Common myeloid progenitor, CD34-positive (primary cell): ENCODE measurements at regions of chr5 and their contacts with region 1.

Region 1: DNA sequence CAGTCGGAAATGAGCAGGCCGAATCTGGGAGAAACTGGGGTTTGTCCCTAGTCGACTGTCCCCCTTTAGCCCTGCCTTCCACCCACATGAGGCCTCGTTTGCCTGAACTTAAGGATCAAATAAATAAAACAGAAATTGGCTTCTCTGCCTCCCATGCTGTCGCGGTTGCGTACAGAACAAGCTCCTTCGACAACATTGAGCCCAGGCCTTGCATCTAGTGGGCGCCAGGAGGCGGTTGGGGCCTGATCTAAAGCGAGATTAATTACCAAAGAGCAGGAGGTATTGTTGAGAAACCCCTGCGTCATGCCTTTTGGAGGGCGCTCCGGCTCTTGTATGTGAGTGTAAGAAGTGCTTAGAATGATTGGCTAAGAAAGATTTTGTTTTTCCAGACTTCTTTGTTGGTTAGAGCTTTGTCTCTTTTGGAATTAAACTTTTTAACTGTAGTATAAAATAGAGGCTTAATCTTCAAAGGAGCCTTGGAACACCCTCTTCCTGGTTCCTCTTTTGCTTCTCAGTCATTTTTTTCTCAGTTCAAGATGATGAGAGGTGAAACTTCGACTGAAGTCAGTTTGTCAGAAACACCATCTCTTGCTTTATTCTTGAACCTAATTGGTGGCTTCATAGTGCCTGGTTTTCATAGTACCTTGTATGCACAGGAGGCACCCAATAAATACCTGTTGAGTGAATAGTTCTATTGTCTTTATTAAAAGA is 827 bp downstream of the ATP6V0E1 start:
- DNase-seq: peak; percentile 92 to 96 (median 95)
- H3K4me3 ChIP-seq: peak overlapping the region; percentile 73 to 94 (median 88)
- H3K27ac ChIP-seq: peak overlapping the region; percentile 74 to 94
- H3K4me1 ChIP-seq: peaks cover 2 to 19% (median 15%) of the 10 kb centered on the region in 4 experiments
- H3K27me3 ChIP-seq: no peaks in the 10 kb centered on the region

Region 2: DNA sequence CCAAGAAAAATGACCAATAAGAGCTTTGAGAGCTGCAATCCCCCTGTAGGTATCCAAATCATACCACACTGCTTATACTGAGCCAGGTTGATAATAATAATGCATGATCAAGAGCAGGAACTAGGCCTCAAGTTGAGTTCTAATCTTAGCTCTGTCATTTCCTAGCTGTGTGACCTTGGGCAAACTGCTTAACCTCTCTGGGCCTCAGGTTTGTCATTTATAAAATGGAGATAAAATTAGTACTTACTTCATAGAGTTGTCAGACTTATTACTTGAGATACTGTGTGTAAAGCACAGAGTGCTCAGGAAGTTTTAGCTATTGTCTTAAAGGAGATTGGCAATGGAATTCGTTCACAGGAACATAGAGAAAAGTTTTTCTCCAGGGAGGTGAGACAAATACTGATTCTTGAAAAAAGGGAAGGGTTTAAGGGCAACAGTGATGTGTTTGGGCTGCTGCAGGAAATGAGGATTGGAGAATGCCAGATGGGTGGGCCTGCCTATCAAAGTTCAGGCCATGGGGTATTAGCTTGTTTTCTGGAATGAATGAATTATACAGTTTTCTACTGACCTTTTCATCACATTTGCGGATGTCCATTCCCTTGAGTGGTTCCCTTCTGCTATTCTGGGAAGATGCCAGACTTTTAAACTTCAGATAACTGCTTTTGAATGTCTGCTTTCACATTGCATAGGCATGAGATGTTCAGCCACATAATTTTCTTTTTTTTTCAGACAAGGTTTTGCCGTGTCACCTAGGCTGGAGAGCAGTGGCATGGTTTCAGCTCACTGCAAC is 11.1 kb before region 1 on chr5:
- CTCF ChIA-PET with region 1: interaction called, 32 read pairs
- POLR2A ChIA-PET with region 1: no interaction called
- DNase-seq: peak in 1 of 3 donors; percentile 21
- H3K4me3 ChIP-seq: no peak overlapping the region
- H3K27ac ChIP-seq: no peak overlapping the region
- H3K4me1 ChIP-seq: no peaks in the 10 kb centered on the region
- H3K27me3 ChIP-seq: peaks cover 0 to 5% (median 0%) of the 10 kb centered on the region in 5 experiments

Region 3: DNA sequence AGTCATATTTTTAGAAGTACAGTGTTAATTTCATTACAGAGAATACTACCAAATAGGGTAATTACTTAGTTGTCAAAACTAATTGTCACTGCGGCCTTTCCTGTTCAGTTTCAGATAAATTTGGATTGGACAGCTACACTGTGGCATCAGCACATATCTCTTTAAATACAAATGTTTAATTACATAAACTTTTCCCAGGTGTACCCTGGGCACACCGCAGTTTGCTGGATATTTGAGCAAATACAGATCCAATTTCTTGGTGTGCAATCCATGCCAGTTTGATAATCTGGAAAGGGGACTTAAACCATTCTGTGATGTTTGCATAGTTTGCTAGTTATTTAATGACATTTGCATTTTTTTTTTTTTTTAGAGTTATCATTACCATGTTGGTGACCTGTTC is 10.0 kb after region 1 on chr5:
- CTCF ChIA-PET with region 1: interaction called, 10 read pairs
- POLR2A ChIA-PET with region 1: interaction called, 3 read pairs
- DNase-seq: no peak
- H3K4me3 ChIP-seq: no peak overlapping the region
- H3K27ac ChIP-seq: no peak overlapping the region
- H3K4me1 ChIP-seq: no peaks in the 10 kb centered on the region
- H3K27me3 ChIP-seq: no peaks in the 10 kb centered on the region

Region 4: DNA sequence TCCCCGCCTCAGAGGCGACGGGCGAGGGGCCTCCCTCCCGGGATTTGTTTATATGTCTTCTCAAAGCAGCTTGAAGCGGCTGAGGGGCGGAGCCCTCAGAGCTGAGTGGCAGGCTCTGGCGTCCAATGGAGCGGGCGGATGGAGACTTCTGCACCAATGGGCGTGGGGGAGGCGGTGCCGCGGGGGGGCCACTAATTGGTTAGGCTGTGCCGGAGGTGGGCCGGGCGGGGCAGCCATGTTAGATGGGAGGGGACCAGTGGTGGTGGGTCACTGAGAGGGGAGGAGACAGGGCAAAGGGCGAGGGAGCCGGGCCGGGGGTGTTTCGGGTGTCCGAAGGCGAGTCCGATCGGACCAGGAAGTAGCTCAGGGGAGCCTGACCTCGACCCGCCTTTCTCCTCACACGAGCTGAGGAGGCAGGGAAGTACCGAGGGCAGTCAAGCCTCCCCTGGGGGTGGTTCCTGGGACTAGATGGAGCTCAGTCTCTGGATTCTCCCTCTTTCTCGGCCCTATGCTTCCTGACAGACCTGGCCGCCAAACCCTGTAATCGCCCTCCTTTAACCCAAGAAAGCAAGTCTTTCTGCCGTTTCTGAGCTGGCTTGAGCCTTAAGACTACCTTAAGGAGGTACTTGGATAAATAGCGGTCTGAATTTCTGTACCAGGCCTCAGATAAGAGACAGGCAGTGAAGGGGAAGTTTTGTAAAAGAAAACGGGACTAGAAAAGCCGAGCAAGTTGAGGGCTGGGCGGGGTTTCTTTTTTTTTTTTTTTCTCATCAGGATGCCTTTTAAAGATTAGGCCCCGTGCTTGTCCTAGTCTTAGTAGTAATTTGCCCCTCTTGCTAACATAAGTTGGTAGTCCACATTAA is 72.9 kb after region 1 on chr5:
- CTCF ChIA-PET with region 1: interaction called, 7 read pairs
- POLR2A ChIA-PET with region 1: interaction called, 15 read pairs
- DNase-seq: peak; percentile 99
- H3K4me3 ChIP-seq: peak overlapping the region; percentile 87 to 99 (median 92)
- H3K27ac ChIP-seq: peak overlapping the region; percentile 88 to 94
- H3K4me1 ChIP-seq: peaks cover 10 to 27% (median 19%) of the 10 kb centered on the region in 4 experiments
- H3K27me3 ChIP-seq: no peaks in the 10 kb centered on the region

Region 5: GRCh38 chr5:173144200-173145176 is 160.1 kb after region 1 on chr5 and contains the start of gene BNIP1:
- CTCF ChIA-PET with region 1: interaction called, 11 read pairs
- POLR2A ChIA-PET with region 1: interaction called, 3 read pairs
- DNase-seq: peak; percentile 96 to 97 (median 96)
- H3K4me3 ChIP-seq: peak within 1 kb of the TSS; percentile 76 to 99 (median 98)
- H3K27ac ChIP-seq: peak within 1 kb of the TSS; percentile 95 to 97
- H3K4me1 ChIP-seq: peaks cover 3 to 8% (median 5%) of the 10 kb centered on the region in 4 experiments
- H3K27me3 ChIP-seq: no peaks in the 10 kb centered on the region

Region 6: GRCh38 chr5:173163219-173163618 is 178.8 kb after region 1 on chr5:
- CTCF ChIA-PET with region 1: no interaction called
- POLR2A ChIA-PET with region 1: no interaction called
- DNase-seq: no peak
- H3K4me3 ChIP-seq: no peak overlapping the region
- H3K27ac ChIP-seq: no peak overlapping the region
- H3K4me1 ChIP-seq: no peaks in the 10 kb centered on the region
- H3K27me3 ChIP-seq: no peaks in the 10 kb centered on the region

Region 7: GRCh38 chr5:173271419-173271818 is 287.0 kb after region 1 on chr5:
- CTCF ChIA-PET with region 1: no interaction called
- POLR2A ChIA-PET with region 1: no interaction called
- DNase-seq: peak in 1 of 3 donors; percentile 8
- H3K4me3 ChIP-seq: no peak overlapping the region
- H3K27ac ChIP-seq: no peak overlapping the region
- H3K4me1 ChIP-seq: no peaks in the 10 kb centered on the region
- H3K27me3 ChIP-seq: peaks cover 0 to 28% (median 5%) of the 10 kb centered on the region in 5 experiments